GM12878 (cell line): ENCODE measurements at regions of chr2 and their contacts with region 1.

Region 1: GRCh38 chr2:80238692-80239469 is 65.7 kb downstream of the LRRTM1 start:
- DNase-seq: no peak
- ATAC-seq: peak; percentile 69
- H3K4me3 ChIP-seq: no peak overlapping the region
- H3K27ac ChIP-seq: no peak overlapping the region
- H3K4me1 ChIP-seq: no peaks in the 10 kb centered on the region
- H3K27me3 ChIP-seq: no peaks in the 10 kb centered on the region
- CTCF ChIP-seq: peak; percentile 49 to 80 (median 78)
- EP300 ChIP-seq: no peak
- POLR2A ChIP-seq: no peak
- RAD21 ChIP-seq: peak; percentile 16; the same call in 1 of the 2 replicates

Region 2: GRCh38 chr2:80073134-80073561 is 165.7 kb before region 1 on chr2:
- CTCF ChIA-PET with region 1: interaction called, 7 read pairs
- POLR2A ChIA-PET with region 1: no interaction called
- RAD21 ChIA-PET with region 1: no interaction called
- SMC1A ChIA-PET with region 1: interaction called, 3 read pairs
- in situ Hi-C with region 1: no loop called
- intact Hi-C with region 1: loop called (anchors 10 kb)
- DNase-seq: peak; percentile 3
- ATAC-seq: peak; percentile 90
- H3K4me3 ChIP-seq: no peak overlapping the region
- H3K27ac ChIP-seq: no peak overlapping the region
- H3K4me1 ChIP-seq: no peaks in the 10 kb centered on the region
- H3K27me3 ChIP-seq: no peaks in the 10 kb centered on the region
- CTCF ChIP-seq: peak; percentile 57 to 70 (median 64); a peak in 5 of 6 replicates
- EP300 ChIP-seq: no peak
- POLR2A ChIP-seq: no peak
- RAD21 ChIP-seq: peak; percentile 70